GM18951 (cell line): ENCODE measurements at regions of chr1 and their contacts with region 1.

Region 1: DNA sequence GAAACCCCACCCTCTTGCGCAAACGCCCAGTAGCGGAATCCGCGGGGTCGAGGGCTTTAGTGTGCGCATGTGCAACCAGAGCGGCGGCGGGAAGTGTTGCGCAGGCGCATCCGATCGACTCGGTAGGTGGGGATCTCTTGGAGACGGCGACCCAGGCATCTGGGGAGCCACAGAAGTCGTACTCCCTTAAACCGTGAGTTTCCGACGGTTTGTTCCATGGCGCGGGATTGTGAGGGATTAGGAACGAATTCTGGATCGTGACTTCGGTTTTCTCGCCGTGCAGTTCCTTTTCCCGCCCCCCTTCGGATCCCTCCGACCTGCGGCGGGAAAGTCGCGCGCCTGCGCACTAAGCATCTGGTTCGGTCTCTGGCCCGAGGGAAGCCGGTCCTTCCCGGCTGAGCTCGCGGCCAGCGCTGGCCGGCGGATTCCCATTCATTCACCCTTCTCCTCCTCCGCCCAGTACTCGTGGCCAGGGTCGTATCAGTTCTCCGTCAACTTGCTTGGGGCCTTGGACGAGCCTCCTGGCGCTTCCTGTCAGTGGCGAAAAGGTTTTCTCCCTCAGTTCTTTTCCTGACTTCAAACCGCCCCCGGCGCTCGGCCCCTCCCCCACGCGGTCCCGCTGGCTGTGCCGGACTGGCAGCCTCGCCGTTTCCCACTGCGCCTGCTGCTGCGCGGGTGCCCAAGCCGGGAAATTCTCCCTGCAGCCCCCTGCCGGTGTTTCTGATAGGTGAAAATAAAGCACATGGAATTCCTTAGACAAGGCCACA is at the start of gene CDC7:
- POLR2A ChIP-seq: peak; percentile 70

Region 2: DNA sequence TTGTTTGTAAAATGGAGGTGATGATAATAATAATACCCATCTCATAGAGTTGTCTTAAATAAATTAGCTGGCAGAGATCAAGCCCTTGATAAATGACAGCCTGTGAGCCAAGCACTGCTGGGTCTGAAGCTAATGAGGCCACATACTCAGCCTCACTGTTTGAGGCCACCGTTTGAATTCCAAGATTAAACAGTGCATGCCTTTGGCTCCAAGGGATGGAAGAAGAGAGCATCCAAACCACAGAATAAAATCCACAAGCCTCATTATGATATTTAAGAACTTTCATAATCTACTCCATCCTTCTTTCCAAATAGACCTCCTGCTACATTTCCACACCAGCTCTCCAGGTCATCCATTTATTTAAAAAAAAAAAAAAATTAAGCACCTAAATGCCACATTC is 356.1 kb after region 1 on chr1:
- in situ Hi-C with region 1: no loop called
- POLR2A ChIP-seq: no peak

Region 3: GRCh38 chr1:91885716-91886506 is 385.0 kb after region 1 on chr1 and contains the start of gene TGFBR3:
- in situ Hi-C with region 1: loop called (anchors 25 kb)
- POLR2A ChIP-seq: no peak

Region 4: GRCh38 chr1:91924146-91924545 is 423.2 kb after region 1 on chr1:
- in situ Hi-C with region 1: no loop called
- POLR2A ChIP-seq: no peak